ENCODE measurements at regions of chr2 and their contacts with region 1.

Region 1: DNA sequence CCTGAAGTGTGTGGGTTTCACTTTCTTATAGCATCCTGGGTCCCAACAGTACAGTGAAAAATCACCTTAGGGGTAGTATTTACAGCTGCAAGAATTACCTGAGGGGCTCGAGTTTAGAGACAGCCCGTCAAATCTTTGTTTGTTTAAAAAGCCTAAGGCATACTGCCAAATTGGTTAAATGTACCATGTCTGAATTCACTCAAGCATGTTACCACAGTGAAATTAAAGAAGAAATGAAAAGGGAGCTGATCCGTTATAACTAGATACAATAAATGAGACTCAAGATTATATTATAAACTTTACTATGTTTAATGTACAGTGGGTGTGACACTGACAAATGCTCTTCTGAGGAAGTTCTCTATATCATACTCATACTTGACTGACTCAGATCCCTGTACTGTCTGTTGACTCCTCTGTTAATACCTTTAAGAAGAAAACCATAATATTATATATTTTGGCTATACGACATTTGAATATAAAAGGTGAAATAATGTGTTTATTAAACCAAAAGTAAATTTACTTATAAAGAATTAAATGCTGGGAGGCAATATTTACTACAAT is 107.3 kb downstream of the TMEFF2 start:
- DNase-seq: no peak
- ATAC-seq: no peak
- H3K4me3 ChIP-seq: no peak overlapping the region
- H3K27ac ChIP-seq: no peak overlapping the region
- H3K4me1 ChIP-seq: no peaks in the 10 kb centered on the region
- H3K27me3 ChIP-seq: no peaks in the 10 kb centered on the region
- CTCF ChIP-seq: no peak
- POLR2A ChIP-seq: no peak

Region 2: DNA sequence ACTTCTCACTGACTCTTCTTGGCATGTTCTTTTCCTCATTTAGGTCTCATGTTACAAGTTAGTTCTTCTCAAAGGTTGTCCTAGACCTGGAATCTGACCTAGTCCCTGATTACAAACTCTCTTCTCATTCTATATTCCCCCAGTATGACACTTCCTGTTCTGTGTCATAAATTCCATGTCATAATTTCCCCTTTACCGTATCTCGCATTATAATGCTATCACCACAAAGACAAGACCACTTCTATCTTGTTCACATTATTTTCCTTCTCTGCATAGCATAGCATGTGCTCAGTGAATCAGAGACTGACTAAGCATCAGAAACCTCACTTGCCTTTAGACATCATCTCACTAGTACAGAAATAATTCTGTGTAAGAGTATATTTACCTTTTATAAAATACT is 177.0 kb before region 1 on chr2:
- in situ Hi-C with region 1: no loop called
- intact Hi-C with region 1: no loop called
- DNase-seq: no peak
- ATAC-seq: no peak
- H3K4me3 ChIP-seq: no peak overlapping the region
- H3K27ac ChIP-seq: no peak overlapping the region
- H3K4me1 ChIP-seq: no peaks in the 10 kb centered on the region
- H3K27me3 ChIP-seq: no peaks in the 10 kb centered on the region
- CTCF ChIP-seq: no peak
- POLR2A ChIP-seq: no peak

Region 3: DNA sequence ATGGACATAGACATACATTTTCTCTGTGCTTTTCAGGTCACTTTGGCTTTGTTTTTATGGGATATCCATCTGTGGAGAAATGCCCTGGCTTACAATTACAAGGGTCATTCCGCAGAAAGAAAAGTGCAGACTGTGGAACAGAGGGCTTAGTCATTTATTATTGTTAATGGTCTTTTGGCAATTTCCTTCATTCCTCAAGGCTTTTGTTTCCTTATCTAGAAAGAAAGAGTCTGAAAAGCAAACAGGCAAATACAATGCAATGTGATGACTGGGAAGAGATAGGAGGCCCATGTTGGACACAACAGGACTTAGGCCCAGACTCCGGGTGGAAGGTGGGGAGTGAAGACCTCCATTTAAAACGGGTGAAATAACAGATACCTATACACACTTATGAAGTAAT is 111.0 kb before region 1 on chr2:
- in situ Hi-C with region 1: no loop called
- intact Hi-C with region 1: no loop called
- DNase-seq: no peak
- ATAC-seq: no peak
- H3K4me3 ChIP-seq: no peak overlapping the region
- H3K27ac ChIP-seq: no peak overlapping the region
- H3K4me1 ChIP-seq: no peaks in the 10 kb centered on the region
- H3K27me3 ChIP-seq: no peaks in the 10 kb centered on the region
- CTCF ChIP-seq: no peak
- POLR2A ChIP-seq: no peak

Region 4: GRCh38 chr2:192070099-192070498 is 17.4 kb before region 1 on chr2:
- in situ Hi-C with region 1: no loop called
- intact Hi-C with region 1: loop called (anchors 1 kb)
- DNase-seq: no peak
- ATAC-seq: no peak
- H3K4me3 ChIP-seq: no peak overlapping the region
- H3K27ac ChIP-seq: no peak overlapping the region
- H3K4me1 ChIP-seq: no peaks in the 10 kb centered on the region
- H3K27me3 ChIP-seq: no peaks in the 10 kb centered on the region
- CTCF ChIP-seq: no peak
- POLR2A ChIP-seq: no peak

Measured in gastrocnemius medialis (tissue), 4 donors.